Activated CD4-positive, alpha-beta T cell treated with anti-CD3 and anti-CD28 coated beads, Interleukin-2, amount 10 ng/mL, durations not matched to agents 24 days and 14 days (primary cell): ENCODE measurements at regions of chr21 and their contacts with region 1.

Region 1: GRCh38 chr21:28745131-28746016 is 247.3 kb downstream of the LTN1 start:
- DNase-seq: peak; percentile 90
- H3K4me3 Mint-ChIP-seq: no peak overlapping the region
- H3K27ac Mint-ChIP-seq: no peak overlapping the region
- H3K4me1 Mint-ChIP-seq: no peaks in the 10 kb centered on the region
- H3K27me3 Mint-ChIP-seq: no peaks in the 10 kb centered on the region

Region 2: DNA sequence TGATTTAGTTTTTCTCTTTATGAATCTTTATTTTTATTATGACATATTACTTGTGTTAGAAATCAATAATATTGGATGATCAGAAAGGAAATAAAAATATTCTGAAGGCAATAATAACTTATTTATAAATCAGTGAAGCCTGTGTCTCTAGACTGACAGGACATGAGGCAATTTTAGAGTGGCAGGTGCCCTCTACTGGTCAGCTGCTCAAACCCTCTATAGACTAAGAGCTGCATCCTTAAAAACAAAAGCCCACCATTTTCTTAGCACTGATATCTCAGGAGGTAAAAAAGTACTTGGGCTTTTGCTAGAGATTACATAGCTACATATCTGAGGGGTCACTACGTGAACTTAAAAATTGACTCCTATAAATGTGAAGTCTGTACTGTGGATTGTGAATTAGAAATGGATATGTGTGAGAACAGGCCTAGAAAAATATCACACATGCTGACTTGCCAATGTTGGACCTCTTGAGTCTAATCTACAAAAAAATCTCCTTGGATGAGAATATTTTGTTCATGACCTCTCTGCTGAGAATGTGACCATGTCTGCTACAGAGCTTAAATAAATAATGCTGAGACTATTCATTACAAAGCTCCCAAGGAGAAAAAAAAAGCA is 1180.6 kb before region 1 on chr21:
- intact Hi-C with region 1: loop called (anchors 10 kb)
- DNase-seq: no peak
- H3K4me3 Mint-ChIP-seq: no peak overlapping the region
- H3K27ac Mint-ChIP-seq: no peak overlapping the region
- H3K4me1 Mint-ChIP-seq: no peaks in the 10 kb centered on the region
- H3K27me3 Mint-ChIP-seq: no peaks in the 10 kb centered on the region

Region 3: GRCh38 chr21:27700974-27701614 is 1044.3 kb before region 1 on chr21:
- intact Hi-C with region 1: loop called (anchors 5 kb)
- DNase-seq: peak; percentile 86
- H3K4me3 Mint-ChIP-seq: no peak overlapping the region
- H3K27ac Mint-ChIP-seq: no peak overlapping the region
- H3K4me1 Mint-ChIP-seq: no peaks in the 10 kb centered on the region
- H3K27me3 Mint-ChIP-seq: no peaks in the 10 kb centered on the region

Region 4: GRCh38 chr21:28516991-28517592 is 228.3 kb before region 1 on chr21:
- intact Hi-C with region 1: loop called (anchors 1 kb)
- DNase-seq: peak; percentile 88
- H3K4me3 Mint-ChIP-seq: no peak overlapping the region
- H3K27ac Mint-ChIP-seq: no peak overlapping the region
- H3K4me1 Mint-ChIP-seq: no peaks in the 10 kb centered on the region
- H3K27me3 Mint-ChIP-seq: peaks cover 10% of the 10 kb centered on the region

Region 5: GRCh38 chr21:28944296-28944695 is 198.9 kb after region 1 on chr21:
- intact Hi-C with region 1: loop called (anchors 2 kb)
- DNase-seq: no peak
- H3K4me3 Mint-ChIP-seq: no peak overlapping the region
- H3K27ac Mint-ChIP-seq: no peak overlapping the region
- H3K4me1 Mint-ChIP-seq: peaks cover 8% of the 10 kb centered on the region
- H3K27me3 Mint-ChIP-seq: no peaks in the 10 kb centered on the region